Heart left ventricle (tissue), 16 donors: ENCODE measurements at regions of chr6 and their contacts with region 1.

Region 1: GRCh38 chr6:155174576-155175211 is 89.1 kb upstream of the CLDN20 start:
- DNase-seq: peak in 3 of 5 donors; percentile 45 to 52 (median 50)
- ATAC-seq: peak; percentile 58 to 90 (median 83)
- H3K4me3 ChIP-seq: no peak overlapping the region
- H3K27ac ChIP-seq: no peak overlapping the region
- H3K4me1 ChIP-seq: peaks cover 0 to 27% (median 9%) of the 10 kb centered on the region in 12 donors
- H3K27me3 ChIP-seq: no peaks in the 10 kb centered on the region
- CTCF ChIP-seq: peak; percentile 35 to 75 (median 62)
- POLR2A ChIP-seq: no peak

Region 2: DNA sequence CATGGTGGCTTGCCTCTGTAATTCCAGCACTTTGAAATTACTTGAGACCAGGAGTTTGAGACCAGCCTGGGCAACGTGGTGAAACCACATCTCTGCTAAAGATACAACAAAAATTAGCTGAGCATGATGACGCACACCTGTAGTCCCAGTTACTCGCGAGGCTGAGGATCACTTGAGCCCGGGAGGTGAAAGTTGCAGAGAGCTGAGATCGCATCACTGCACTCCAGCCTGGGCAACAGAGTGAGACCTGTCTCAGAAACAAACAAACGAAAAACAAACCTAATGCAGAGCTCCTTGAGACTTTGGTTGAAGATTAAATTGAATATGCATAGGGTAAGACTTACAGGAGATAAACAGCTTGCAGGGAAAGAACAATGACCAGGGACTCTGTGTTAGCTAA is 360.6 kb before region 1 on chr6:
- intact Hi-C with region 1: no loop called
- DNase-seq: no peak
- ATAC-seq: no peak
- H3K4me3 ChIP-seq: no peak overlapping the region
- H3K27ac ChIP-seq: no peak overlapping the region
- H3K4me1 ChIP-seq: no peaks in the 10 kb centered on the region
- H3K27me3 ChIP-seq: no peaks in the 10 kb centered on the region
- CTCF ChIP-seq: no peak
- POLR2A ChIP-seq: no peak

Region 3: DNA sequence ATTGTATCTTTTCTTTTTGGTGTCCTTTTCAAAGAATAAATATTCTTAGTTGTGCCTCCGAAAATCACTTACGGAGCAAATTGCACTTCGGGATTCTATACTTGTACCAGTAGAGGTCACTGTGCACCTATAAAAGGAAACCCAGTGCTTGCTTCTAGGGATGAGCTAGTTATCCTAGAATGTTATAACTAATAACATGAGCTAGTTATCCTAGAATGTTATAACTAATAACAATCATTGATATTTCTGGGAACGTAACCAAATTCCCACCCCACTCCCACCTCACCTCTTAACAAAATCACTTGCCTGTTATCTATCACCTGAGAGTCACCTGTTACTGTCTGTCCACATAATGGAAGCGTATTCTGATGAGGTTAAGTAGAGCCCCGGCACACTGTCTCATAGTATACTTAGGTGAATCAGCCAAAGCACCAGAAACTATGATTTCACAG is 306.5 kb before region 1 on chr6:
- intact Hi-C with region 1: loop called (anchors 2 to 5 kb)
- DNase-seq: no peak
- ATAC-seq: peak in 2 of 4 donors; percentile 42 to 50
- H3K4me3 ChIP-seq: no peak overlapping the region
- H3K27ac ChIP-seq: no peak overlapping the region
- H3K4me1 ChIP-seq: peaks cover 0 to 16% (median 0%) of the 10 kb centered on the region in 12 donors
- H3K27me3 ChIP-seq: no peaks in the 10 kb centered on the region
- CTCF ChIP-seq: peak; percentile 57 to 89 (median 70)
- POLR2A ChIP-seq: no peak

Region 4: GRCh38 chr6:154962753-154963152 is 211.9 kb before region 1 on chr6:
- intact Hi-C with region 1: no loop called
- DNase-seq: no peak
- ATAC-seq: no peak
- H3K4me3 ChIP-seq: no peak overlapping the region
- H3K27ac ChIP-seq: no peak overlapping the region
- H3K4me1 ChIP-seq: peaks cover 0 to 4% (median 0%) of the 10 kb centered on the region in 12 donors
- H3K27me3 ChIP-seq: no peaks in the 10 kb centered on the region
- CTCF ChIP-seq: no peak
- POLR2A ChIP-seq: no peak

Region 5: DNA sequence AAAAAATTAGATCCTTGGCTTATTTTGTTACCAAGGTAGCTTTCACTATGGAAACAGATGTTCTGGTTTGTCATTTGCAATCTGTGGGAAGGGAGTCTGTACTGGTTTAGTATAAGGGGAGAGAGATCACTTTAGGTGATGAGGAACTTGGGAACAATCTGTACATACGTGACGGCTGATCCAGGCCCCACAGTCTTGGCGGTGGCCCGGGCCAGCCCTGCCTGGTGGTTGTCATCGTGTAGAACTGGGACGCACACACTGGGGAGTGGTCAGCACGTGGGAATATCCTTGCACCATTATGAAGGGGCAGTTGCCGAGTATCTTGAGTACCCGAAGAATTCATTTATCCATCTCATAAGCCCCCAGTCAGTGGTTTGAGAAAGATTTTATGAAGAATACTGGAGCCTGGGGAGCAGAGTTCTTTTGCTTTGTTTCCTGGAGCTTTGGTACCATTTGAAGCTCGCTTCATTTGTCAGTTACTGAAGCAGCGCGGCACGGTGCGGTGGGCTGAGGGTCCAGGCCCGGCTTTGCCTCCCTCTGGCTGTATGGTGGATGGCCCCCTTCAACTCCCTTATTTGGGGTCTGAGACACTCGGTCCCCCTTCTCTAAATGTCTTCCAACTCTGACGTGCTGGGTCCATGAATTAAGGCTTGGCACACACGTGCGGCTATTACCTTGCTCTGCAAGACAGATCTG is 66.4 kb after region 1 on chr6:
- intact Hi-C with region 1: loop called in 6 of 10 experiments (anchors 2 to 5 kb)
- DNase-seq: no peak
- ATAC-seq: no peak
- H3K4me3 ChIP-seq: no peak overlapping the region
- H3K27ac ChIP-seq: no peak overlapping the region
- H3K4me1 ChIP-seq: no peaks in the 10 kb centered on the region
- H3K27me3 ChIP-seq: no peaks in the 10 kb centered on the region
- CTCF ChIP-seq: no peak
- POLR2A ChIP-seq: no peak

Region 6: DNA sequence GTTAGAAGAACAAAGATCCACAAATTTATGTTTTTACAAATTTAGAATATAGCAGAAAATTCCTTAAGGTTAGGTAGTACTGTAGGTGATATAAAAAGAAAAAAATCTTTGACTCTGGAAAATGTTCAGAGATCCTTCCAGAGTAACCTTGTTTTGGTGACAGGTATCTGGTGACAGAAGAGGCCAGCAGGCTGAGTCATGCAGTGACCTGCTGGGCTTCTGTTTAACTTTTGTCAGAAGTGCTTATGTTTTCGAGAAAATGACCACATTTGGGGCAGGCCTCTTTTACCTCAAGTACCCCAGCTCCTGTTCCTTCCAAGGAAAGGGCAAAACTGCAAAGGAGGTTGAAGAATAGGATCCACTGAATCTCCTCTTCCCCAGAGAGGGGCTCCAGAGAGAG is 78.6 kb after region 1 on chr6:
- intact Hi-C with region 1: loop called in 6 of 10 experiments (anchors 2 to 5 kb)
- DNase-seq: no peak
- ATAC-seq: peak; percentile 30 to 61 (median 42)
- H3K4me3 ChIP-seq: no peak overlapping the region
- H3K27ac ChIP-seq: peak overlapping the region in 11 of 12 donors; percentile 11 to 65 (median 36)
- H3K4me1 ChIP-seq: peaks cover 0 to 35% (median 9%) of the 10 kb centered on the region in 12 donors
- H3K27me3 ChIP-seq: no peaks in the 10 kb centered on the region
- CTCF ChIP-seq: no peak
- POLR2A ChIP-seq: no peak